B cell (primary cell): ENCODE measurements at regions of chr14 and their contacts with region 1.

Region 1: DNA sequence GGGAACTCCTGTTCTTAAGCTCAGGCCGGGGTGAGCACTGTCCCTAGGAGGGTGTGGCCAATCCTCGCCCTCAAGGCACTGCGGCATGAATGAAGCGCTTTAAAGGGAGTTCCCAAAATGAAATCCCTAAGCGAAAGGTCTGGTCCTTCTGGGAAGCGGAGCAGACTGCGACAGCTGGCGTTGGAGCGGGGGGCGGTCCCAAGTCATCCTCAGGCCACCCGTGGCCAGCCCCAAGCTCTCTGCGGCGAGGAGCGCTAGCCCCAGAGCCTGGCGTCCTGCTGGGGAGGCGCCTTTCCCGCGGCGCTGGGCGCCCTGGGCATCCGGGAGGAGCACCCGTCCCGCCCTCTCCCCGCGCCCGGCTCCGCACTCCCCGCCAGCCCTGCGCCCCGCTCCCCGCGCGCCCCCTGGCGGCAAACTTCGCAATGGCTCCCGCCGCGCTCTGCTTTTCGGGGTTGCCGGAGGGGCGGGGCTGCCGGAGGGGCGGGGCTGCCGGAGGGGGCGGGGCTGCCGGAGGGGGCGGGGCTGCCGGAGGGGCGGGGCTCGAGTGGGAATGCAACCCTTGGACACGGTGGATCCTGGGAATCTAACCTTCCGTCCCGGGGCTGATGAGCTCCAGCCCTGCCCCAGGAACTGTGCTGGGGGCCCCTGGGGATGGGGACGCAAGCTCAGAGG is 25.4 kb downstream of the ZBTB42 start:
- DNase-seq: peak; percentile 91
- ATAC-seq: peak; percentile 88
- H3K4me3 ChIP-seq: peak overlapping the region; percentile 39 to 78 (median 64)
- H3K4me3 Mint-ChIP-seq: peak overlapping the region; percentile 85
- H3K27ac ChIP-seq: no peak overlapping the region
- H3K27ac Mint-ChIP-seq: peak overlapping the region; percentile 46
- H3K4me1 ChIP-seq: peaks cover 19 to 21% of the 10 kb centered on the region in 2 donors
- H3K4me1 Mint-ChIP-seq: peaks cover 29% of the 10 kb centered on the region
- H3K27me3 ChIP-seq: peaks cover 0 to 21% (median 10%) of the 10 kb centered on the region in 4 experiments
- H3K27me3 Mint-ChIP-seq: peaks cover 10% of the 10 kb centered on the region
- CTCF ChIP-seq: peak; percentile 78

Region 2: GRCh38 chr14:104800015-104800770 is 26.1 kb before region 1 on chr14:
- CTCF ChIA-PET with region 1: interaction called, 13 read pairs
- POLR2A ChIA-PET with region 1: interaction called, 4 read pairs
- intact Hi-C with region 1: loop called (anchors 2 kb)
- DNase-seq: peak; percentile 91
- ATAC-seq: peak; percentile 76
- H3K4me3 ChIP-seq: peak overlapping the region in 4 of 5 experiments; percentile 49 to 85 (median 76)
- H3K4me3 Mint-ChIP-seq: peak overlapping the region; percentile 81
- H3K27ac ChIP-seq: peak overlapping the region; percentile 72 to 88
- H3K27ac Mint-ChIP-seq: peak overlapping the region; percentile 80
- H3K4me1 ChIP-seq: peaks cover 19 to 54% of the 10 kb centered on the region in 2 donors
- H3K4me1 Mint-ChIP-seq: peaks cover 44% of the 10 kb centered on the region
- H3K27me3 ChIP-seq: no peaks in the 10 kb centered on the region
- H3K27me3 Mint-ChIP-seq: no peaks in the 10 kb centered on the region
- CTCF ChIP-seq: peak; percentile 40

Region 3: DNA sequence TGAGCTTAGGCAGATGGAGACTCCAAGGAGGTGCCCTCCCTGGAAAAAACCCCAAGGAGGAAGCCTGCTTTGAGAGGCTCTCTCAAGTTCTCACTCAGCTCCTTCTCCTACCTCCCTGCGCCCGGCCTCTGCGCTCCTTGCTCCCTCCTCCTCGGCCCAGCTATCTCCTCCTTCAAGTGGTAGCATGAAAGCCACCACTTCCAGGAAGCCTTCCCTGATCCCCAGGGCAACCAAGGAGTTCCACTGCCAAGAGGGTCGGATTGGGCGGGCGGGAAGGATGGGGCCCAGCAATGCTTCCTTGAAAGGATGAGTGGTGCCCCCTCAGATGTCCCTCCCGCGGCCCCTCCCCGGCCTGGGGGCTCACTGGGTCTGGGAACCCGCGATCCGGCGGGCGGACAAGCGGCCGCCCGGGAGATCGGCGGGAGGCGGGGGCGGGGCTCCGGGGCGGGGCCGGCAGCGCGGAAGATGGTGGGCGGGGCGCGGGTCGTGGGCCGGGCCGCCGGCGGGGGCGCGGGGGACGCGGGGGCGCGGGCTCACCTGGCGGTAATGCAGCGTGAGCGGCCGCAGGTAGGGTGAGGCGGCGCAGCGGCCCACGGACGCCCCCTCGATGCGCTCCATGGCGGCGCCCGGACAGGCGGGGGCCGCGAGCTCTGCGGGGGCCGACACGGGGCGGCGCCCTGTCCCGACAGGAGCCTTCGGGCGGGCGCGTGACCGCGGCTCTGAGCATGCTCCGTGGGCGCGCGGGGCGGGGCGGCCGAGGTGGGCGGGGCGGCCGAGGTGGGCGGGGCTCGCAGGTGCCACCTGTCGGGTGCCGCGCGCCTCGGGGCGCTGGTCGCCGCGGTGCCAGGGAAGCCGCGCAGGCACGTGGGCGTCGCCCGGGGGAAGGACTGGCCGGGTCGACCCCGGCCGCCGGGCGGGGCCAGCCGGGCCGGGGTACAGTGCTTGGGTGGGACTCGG is 354.5 kb after region 1 on chr14 and contains the start of gene NUDT14:
- CTCF ChIA-PET with region 1: no interaction called
- POLR2A ChIA-PET with region 1: no interaction called
- intact Hi-C with region 1: loop called (anchors 5 kb)
- DNase-seq: peak; percentile 92
- ATAC-seq: peak; percentile 92
- H3K4me3 ChIP-seq: peak within 1 kb of the TSS in 4 of 5 experiments; percentile 37 to 65 (median 53)
- H3K4me3 Mint-ChIP-seq: peak within 1 kb of the TSS; percentile 84
- H3K27ac ChIP-seq: no peak within 1 kb of the TSS
- H3K27ac Mint-ChIP-seq: peak within 1 kb of the TSS; percentile 61
- H3K4me1 ChIP-seq: peaks cover 9 to 21% of the 10 kb centered on the region in 2 donors
- H3K4me1 Mint-ChIP-seq: peaks cover 12% of the 10 kb centered on the region
- H3K27me3 ChIP-seq: peaks cover 0 to 8% (median 0%) of the 10 kb centered on the region in 4 experiments
- H3K27me3 Mint-ChIP-seq: no peaks in the 10 kb centered on the region
- CTCF ChIP-seq: no peak
- total RNA-seq, gene NUDT14: 28.9 and 31.6 TPM in 2 replicates